ENCODE measurements at regions of chr1 and their contacts with region 1.

Region 1: GRCh38 chr1:44019466-44019948 is 11.8 kb downstream of the SLC6A9 start:
- DNase-seq: no peak
- H3K27ac ChIP-seq: no peak overlapping the region
- CTCF ChIP-seq: no peak

Region 2: GRCh38 chr1:44036409-44037139 is 17.1 kb after region 1 on chr1:
- CTCF ChIA-PET with region 1: interaction called, 11 read pairs
- POLR2A ChIA-PET with region 1: no interaction called
- DNase-seq: peak; percentile 68
- H3K27ac ChIP-seq: peak overlapping the region; percentile 96
- CTCF ChIP-seq: peak; percentile 91